IMR-90 (cell line): ENCODE measurements at regions of chr2 and their contacts with region 1.

Region 1: GRCh38 chr2:234770031-234770506 is 181.7 kb upstream of the SH3BP4 start:
- DNase-seq: peak; percentile 72
- ATAC-seq: peak; percentile 77
- H3K4me3 ChIP-seq: no peak overlapping the region
- H3K27ac ChIP-seq: peak overlapping the region; percentile 66
- H3K4me1 ChIP-seq: peaks cover 30% of the 10 kb centered on the region
- H3K27me3 ChIP-seq: no peaks in the 10 kb centered on the region
- CTCF ChIP-seq: no peak
- POLR2A ChIP-seq: no peak
- RAD21 ChIP-seq: no peak

Region 2: GRCh38 chr2:234674781-234675201 is 95.3 kb before region 1 on chr2:
- CTCF ChIA-PET with region 1: no interaction called
- POLR2A ChIA-PET with region 1: interaction called, 16 read pairs
- dilution Hi-C with region 1: no loop called
- in situ Hi-C with region 1: no loop called
- intact Hi-C with region 1: no loop called
- DNase-seq: peak; percentile 81
- ATAC-seq: peak; percentile 56
- H3K4me3 ChIP-seq: no peak overlapping the region
- H3K27ac ChIP-seq: peak overlapping the region; percentile 100
- H3K4me1 ChIP-seq: peaks cover 58% of the 10 kb centered on the region
- H3K27me3 ChIP-seq: no peaks in the 10 kb centered on the region
- CTCF ChIP-seq: no peak
- POLR2A ChIP-seq: peak; percentile 38; the same call in 1 of the 2 replicates
- RAD21 ChIP-seq: no peak

Region 3: GRCh38 chr2:234795272-234795920 is 25.3 kb after region 1 on chr2:
- CTCF ChIA-PET with region 1: interaction called, 3 read pairs
- POLR2A ChIA-PET with region 1: no interaction called
- dilution Hi-C with region 1: no loop called
- in situ Hi-C with region 1: no loop called
- intact Hi-C with region 1: loop called (anchors 2 kb)
- DNase-seq: peak; percentile 26
- ATAC-seq: peak; percentile 57
- H3K4me3 ChIP-seq: no peak overlapping the region
- H3K27ac ChIP-seq: no peak overlapping the region
- H3K4me1 ChIP-seq: peaks cover 6% of the 10 kb centered on the region
- H3K27me3 ChIP-seq: no peaks in the 10 kb centered on the region
- CTCF ChIP-seq: no peak
- POLR2A ChIP-seq: no peak
- RAD21 ChIP-seq: no peak

Region 4: GRCh38 chr2:234805836-234806235 is 35.8 kb after region 1 on chr2:
- CTCF ChIA-PET with region 1: no interaction called
- POLR2A ChIA-PET with region 1: no interaction called
- dilution Hi-C with region 1: no loop called
- in situ Hi-C with region 1: no loop called
- intact Hi-C with region 1: no loop called
- DNase-seq: no peak
- ATAC-seq: no peak
- H3K4me3 ChIP-seq: no peak overlapping the region
- H3K27ac ChIP-seq: no peak overlapping the region
- H3K4me1 ChIP-seq: no peaks in the 10 kb centered on the region
- H3K27me3 ChIP-seq: peaks cover 6% of the 10 kb centered on the region
- CTCF ChIP-seq: no peak
- POLR2A ChIP-seq: no peak
- RAD21 ChIP-seq: no peak

Region 5: GRCh38 chr2:234873828-234874173 is 103.7 kb after region 1 on chr2:
- CTCF ChIA-PET with region 1: no interaction called
- POLR2A ChIA-PET with region 1: no interaction called
- dilution Hi-C with region 1: no loop called
- in situ Hi-C with region 1: no loop called
- intact Hi-C with region 1: loop called (anchors 5 kb)
- DNase-seq: peak; percentile 70
- ATAC-seq: peak; percentile 72
- H3K4me3 ChIP-seq: no peak overlapping the region
- H3K27ac ChIP-seq: no peak overlapping the region
- H3K4me1 ChIP-seq: no peaks in the 10 kb centered on the region; the same call in none of the 2 replicates
- H3K27me3 ChIP-seq: no peaks in the 10 kb centered on the region
- CTCF ChIP-seq: no peak
- POLR2A ChIP-seq: no peak
- RAD21 ChIP-seq: no peak